ENCODE measurements at regions of chr16 and their contacts with region 1.

Region 1: DNA sequence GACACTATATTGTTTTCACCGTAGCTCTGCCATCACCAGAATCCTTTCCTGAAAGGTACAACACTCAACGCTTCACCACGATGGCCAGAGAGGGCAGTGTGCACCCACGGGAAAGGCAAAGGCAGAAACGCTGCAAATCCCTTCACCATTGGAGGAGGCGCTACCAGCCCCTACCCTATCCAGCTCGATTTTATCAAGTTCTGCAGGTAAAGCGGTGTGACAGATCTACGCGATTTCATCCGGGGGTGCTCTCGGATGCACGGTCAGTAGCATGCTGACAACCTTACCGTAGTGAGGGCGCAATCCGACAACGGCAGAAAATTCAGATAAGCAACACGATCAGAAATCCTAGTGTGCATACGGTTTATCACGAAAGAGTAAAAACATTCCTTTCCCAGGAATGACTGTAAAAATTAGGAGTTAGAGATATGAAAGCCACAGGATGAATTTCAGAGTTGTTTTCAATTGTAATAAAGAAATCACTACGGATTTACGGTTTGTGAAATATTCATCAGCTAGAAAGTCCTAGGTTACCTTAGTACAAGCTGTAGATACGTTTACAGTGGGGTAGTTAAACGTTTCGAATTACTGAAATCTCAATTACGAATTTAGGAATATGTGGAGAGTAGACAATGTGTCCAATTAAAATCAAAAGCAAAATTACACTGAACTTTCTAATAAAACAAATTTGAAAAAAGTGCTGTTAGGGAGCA is 1.8 kb downstream of the NETO2 start:
- DNase-seq: peak; percentile 81
- H3K4me3 ChIP-seq: peak overlapping the region in 3 of 4 donors; percentile 41 to 52 (median 50)
- H3K27ac ChIP-seq: no peak overlapping the region
- H3K4me1 ChIP-seq: peaks cover 0 to 28% (median 24%) of the 10 kb centered on the region in 4 donors
- H3K27me3 ChIP-seq: peaks cover 10 to 47% (median 30%) of the 10 kb centered on the region in 3 donors
- CTCF ChIP-seq: peak; percentile 40 to 78 (median 76)
- EP300 ChIP-seq: no peak
- POLR2A ChIP-seq: no peak

Region 2: GRCh38 chr16:48054881-48055601 is 913.1 kb after region 1 on chr16:
- intact Hi-C with region 1: loop called (anchors 10 kb)
- DNase-seq: no peak
- H3K4me3 ChIP-seq: no peak overlapping the region
- H3K27ac ChIP-seq: no peak overlapping the region
- H3K4me1 ChIP-seq: no peaks in the 10 kb centered on the region
- H3K27me3 ChIP-seq: peaks cover 0 to 21% (median 4%) of the 10 kb centered on the region in 3 donors
- CTCF ChIP-seq: peak in 3 of 4 experiments; percentile 37 to 51 (median 40)
- EP300 ChIP-seq: no peak
- POLR2A ChIP-seq: no peak

Region 3: DNA sequence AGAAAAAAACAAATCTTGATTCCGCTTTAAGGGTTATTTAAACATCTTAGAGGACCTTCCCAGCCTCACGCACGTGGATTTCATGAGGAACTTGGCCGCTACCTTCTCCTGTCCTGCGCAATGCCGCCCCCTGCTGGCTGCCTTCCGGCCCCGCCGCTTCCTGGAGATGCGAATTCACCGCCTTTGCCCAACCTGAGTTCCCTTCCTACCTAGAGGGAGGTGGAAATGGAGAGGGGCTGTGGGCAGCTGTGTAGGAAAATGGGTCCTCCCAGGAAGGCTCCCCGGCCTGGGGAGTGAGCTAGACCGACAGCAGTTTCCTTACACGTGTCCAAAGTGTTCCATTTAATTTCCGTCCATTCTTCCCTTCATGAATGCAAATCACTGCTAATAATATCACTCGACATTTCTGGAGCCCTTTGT is 1014.9 kb after region 1 on chr16:
- intact Hi-C with region 1: loop called (anchors 1 kb)
- DNase-seq: peak; percentile 82
- H3K4me3 ChIP-seq: no peak overlapping the region
- H3K27ac ChIP-seq: no peak overlapping the region
- H3K4me1 ChIP-seq: peaks cover 0 to 5% (median 2%) of the 10 kb centered on the region in 4 donors
- H3K27me3 ChIP-seq: peaks cover 0 to 18% (median 8%) of the 10 kb centered on the region in 3 donors
- CTCF ChIP-seq: peak; percentile 44 to 90 (median 68)
- EP300 ChIP-seq: no peak
- POLR2A ChIP-seq: no peak

Measured in sigmoid colon (tissue), 7 donors.